Heart left ventricle (tissue), 16 donors: ENCODE measurements at regions of chr18 and their contacts with region 1.

Region 1: GRCh38 chr18:46609048-46609447 is 48.0 kb downstream of the LOXHD1 start:
- DNase-seq: no peak
- ATAC-seq: no peak
- H3K4me3 ChIP-seq: no peak overlapping the region
- H3K27ac ChIP-seq: no peak overlapping the region
- H3K4me1 ChIP-seq: no peaks in the 10 kb centered on the region
- H3K27me3 ChIP-seq: peaks cover 0 to 7% (median 0%) of the 10 kb centered on the region in 9 donors
- CTCF ChIP-seq: no peak
- POLR2A ChIP-seq: no peak

Region 2: GRCh38 chr18:46581648-46582047 is 27.4 kb before region 1 on chr18:
- intact Hi-C with region 1: loop called in 1 of 10 experiments (anchors 2 kb)
- DNase-seq: no peak
- ATAC-seq: no peak
- H3K4me3 ChIP-seq: no peak overlapping the region
- H3K27ac ChIP-seq: no peak overlapping the region
- H3K4me1 ChIP-seq: no peaks in the 10 kb centered on the region
- H3K27me3 ChIP-seq: no peaks in the 10 kb centered on the region
- CTCF ChIP-seq: no peak
- POLR2A ChIP-seq: no peak